Psoas muscle (tissue), 8 donors: ENCODE measurements at regions of chr3 and their contacts with region 1.

Region 1: DNA sequence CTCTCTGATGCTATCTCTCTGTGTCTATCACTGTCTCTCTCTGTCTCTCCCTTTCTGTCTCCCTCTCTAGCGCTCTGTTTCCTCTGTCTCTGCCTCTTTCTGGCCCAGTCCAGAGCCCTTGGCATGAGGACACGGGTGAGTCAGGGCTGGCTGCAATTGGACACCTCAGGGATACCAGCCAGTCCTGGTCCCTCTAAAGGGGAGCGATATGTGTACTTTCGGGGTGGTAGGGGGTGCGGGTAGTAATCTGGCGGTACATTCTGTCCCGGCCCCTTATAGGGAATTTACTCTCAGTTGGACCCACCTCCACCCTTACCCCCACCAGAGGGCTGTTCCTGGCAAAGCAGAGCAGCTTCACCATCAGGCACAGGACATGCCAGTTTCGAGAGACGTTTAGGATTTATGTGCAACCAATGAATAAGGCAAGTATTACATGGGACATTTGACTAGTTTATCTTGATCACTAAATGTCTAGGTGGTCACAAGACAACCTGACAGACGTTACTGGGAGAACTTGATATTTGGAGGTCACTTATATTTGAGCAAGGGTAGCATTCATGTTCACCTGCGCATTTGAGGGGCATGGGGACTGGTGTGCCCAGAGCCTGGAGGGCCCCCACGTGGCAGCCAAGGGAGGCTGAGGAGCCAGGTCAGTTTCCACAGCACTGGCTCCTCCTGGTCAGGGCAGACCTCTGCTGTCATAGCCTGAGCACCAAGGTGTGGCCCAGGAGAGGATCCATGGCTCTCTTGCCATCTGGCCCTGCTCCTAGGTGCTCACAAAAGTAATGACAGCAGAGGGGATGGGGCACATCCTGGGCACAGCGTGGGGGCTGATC is 256.1 kb downstream of the PLCL2 start:
- DNase-seq: peak; percentile 70 to 90
- ATAC-seq: peak; percentile 90 to 93 (median 92)
- H3K4me3 ChIP-seq: peak overlapping the region; percentile 60
- H3K27ac ChIP-seq: peak overlapping the region; percentile 78
- H3K4me1 ChIP-seq: peaks cover 19% of the 10 kb centered on the region
- H3K27me3 ChIP-seq: no peaks in the 10 kb centered on the region
- CTCF ChIP-seq: peak; percentile 33

Region 2: DNA sequence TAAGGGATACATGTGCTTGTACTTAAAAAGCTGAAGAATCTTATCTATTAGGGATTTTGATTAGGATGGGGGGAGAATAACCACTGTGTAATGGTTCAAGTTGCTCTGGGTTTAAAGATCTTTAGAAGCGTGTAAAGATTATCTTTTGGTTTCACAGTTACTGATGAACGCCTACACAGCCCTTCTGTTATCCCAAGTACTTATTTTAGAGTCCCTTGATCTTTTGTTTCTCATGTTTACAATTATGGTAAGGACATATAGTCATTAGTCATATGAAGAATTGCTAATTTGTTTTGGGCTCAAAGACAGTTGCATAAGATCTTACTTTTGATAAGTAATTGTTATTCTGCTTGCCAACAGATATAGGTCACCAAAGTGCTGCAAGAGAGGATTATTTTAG is 96.0 kb before region 1 on chr3:
- intact Hi-C with region 1: loop called in 1 of 2 experiments (anchors 10 kb)
- DNase-seq: no peak
- ATAC-seq: no peak
- H3K4me3 ChIP-seq: no peak overlapping the region
- H3K27ac ChIP-seq: no peak overlapping the region
- H3K4me1 ChIP-seq: peaks cover 14% of the 10 kb centered on the region
- H3K27me3 ChIP-seq: no peaks in the 10 kb centered on the region
- CTCF ChIP-seq: no peak

Region 3: DNA sequence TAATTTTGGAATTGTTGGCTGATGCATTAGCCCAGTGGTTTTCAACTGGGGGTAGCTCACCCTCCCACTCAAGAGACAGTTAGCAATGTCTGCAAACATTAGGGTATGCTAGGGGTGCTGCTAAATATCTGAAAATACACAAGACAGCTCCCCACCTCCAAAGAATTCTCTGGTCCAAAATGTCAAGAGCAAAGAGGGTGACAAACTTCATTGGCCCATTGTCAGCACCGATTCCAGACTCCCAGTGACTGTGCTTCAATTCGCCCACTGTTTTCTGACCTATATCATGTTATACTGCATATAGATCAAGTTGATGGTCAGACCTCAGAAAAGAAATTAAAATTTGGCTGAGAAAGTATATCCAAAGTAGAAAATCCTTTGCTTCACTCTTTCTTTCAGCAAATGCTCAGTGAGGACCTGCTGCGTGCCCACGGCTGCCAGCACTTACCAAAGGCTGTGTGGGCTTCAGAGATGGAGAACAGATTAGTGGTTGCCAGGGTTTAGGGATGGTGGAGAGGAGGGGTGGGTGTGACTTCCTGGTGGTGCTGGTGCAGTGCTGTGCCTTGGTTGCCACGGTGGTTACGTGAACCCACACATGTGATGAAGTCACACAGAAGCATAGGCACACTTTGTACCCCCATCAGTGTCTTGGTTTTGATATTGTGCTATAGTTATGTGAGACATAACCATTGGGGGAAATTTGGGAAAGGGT is 52.1 kb before region 1 on chr3:
- intact Hi-C with region 1: loop called in 1 of 2 experiments (anchors 5 kb)
- DNase-seq: no peak
- ATAC-seq: peak; percentile 36 to 45 (median 42)
- H3K4me3 ChIP-seq: peak overlapping the region; percentile 4
- H3K27ac ChIP-seq: peak overlapping the region; percentile 87
- H3K4me1 ChIP-seq: peaks cover 64% of the 10 kb centered on the region
- H3K27me3 ChIP-seq: no peaks in the 10 kb centered on the region
- CTCF ChIP-seq: no peak

Region 4: GRCh38 chr3:17094551-17094950 is 46.3 kb before region 1 on chr3:
- intact Hi-C with region 1: loop called (anchors 2 to 5 kb)
- DNase-seq: no peak
- ATAC-seq: peak; percentile 45 to 58 (median 54)
- H3K4me3 ChIP-seq: no peak overlapping the region
- H3K27ac ChIP-seq: peak overlapping the region; percentile 36
- H3K4me1 ChIP-seq: peaks cover 46% of the 10 kb centered on the region
- H3K27me3 ChIP-seq: no peaks in the 10 kb centered on the region
- CTCF ChIP-seq: no peak

Region 5: GRCh38 chr3:17190353-17191078 is 49.6 kb after region 1 on chr3:
- intact Hi-C with region 1: loop called in 1 of 2 experiments (anchors 5 kb)
- DNase-seq: no peak
- ATAC-seq: peak; percentile 53 to 77 (median 67)
- H3K4me3 ChIP-seq: no peak overlapping the region
- H3K27ac ChIP-seq: peak overlapping the region; percentile 69
- H3K4me1 ChIP-seq: peaks cover 58% of the 10 kb centered on the region
- H3K27me3 ChIP-seq: no peaks in the 10 kb centered on the region
- CTCF ChIP-seq: no peak

Region 6: DNA sequence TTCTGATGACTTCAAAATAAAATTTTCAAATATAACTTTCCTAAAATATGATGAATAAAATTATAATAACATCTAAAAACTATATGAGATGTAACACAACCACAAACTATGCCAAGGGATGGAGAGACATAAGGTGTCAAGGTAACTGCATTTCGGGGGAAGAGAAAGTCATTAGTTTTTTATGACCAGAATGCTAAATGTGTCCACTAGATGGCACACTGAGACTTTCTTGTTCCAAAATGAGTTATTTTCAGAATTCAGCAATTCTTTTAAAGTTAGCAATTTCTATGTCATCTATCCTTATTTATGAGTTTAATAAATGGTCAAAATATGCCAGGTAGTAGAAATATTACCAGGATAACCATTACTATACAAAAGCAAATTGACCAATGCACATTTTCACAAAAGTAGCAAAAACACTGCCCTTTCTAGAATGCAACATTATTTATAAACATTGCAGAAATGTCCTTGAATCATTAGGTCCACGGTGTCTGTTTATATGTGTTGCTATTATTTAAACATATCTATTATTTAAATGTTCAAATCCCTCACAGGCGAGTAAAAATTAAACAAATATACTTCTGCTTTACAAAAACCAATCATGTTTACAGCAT is 118.0 kb after region 1 on chr3:
- intact Hi-C with region 1: no loop called
- DNase-seq: no peak
- ATAC-seq: no peak
- H3K4me3 ChIP-seq: no peak overlapping the region
- H3K27ac ChIP-seq: no peak overlapping the region
- H3K4me1 ChIP-seq: no peaks in the 10 kb centered on the region
- H3K27me3 ChIP-seq: no peaks in the 10 kb centered on the region
- CTCF ChIP-seq: peak; percentile 79